Activated CD8-positive, alpha-beta memory T cell treated with anti-CD3 and anti-CD28 coated beads, Interleukin-2, amount 10 ng/mL, durations not matched to agents 7 days and 5 days (primary cell): ENCODE measurements at regions of chr20 and their contacts with region 1.

Region 1: GRCh38 chr20:40962730-40963504 is 65.7 kb upstream of the TOP1 start:
- DNase-seq: peak; percentile 83
- ATAC-seq: peak; percentile 90
- H3K4me3 Mint-ChIP-seq: no peak overlapping the region
- H3K27ac Mint-ChIP-seq: no peak overlapping the region
- H3K4me1 Mint-ChIP-seq: peaks cover 15% of the 10 kb centered on the region
- H3K27me3 Mint-ChIP-seq: peaks cover 5% of the 10 kb centered on the region

Region 2: GRCh38 chr20:40331807-40332560 is 630.9 kb before region 1 on chr20:
- CTCF ChIA-PET with region 1: no interaction called
- DNase-seq: no peak
- ATAC-seq: no peak
- H3K4me3 Mint-ChIP-seq: no peak overlapping the region
- H3K27ac Mint-ChIP-seq: no peak overlapping the region
- H3K4me1 Mint-ChIP-seq: no peaks in the 10 kb centered on the region
- H3K27me3 Mint-ChIP-seq: no peaks in the 10 kb centered on the region

Region 3: DNA sequence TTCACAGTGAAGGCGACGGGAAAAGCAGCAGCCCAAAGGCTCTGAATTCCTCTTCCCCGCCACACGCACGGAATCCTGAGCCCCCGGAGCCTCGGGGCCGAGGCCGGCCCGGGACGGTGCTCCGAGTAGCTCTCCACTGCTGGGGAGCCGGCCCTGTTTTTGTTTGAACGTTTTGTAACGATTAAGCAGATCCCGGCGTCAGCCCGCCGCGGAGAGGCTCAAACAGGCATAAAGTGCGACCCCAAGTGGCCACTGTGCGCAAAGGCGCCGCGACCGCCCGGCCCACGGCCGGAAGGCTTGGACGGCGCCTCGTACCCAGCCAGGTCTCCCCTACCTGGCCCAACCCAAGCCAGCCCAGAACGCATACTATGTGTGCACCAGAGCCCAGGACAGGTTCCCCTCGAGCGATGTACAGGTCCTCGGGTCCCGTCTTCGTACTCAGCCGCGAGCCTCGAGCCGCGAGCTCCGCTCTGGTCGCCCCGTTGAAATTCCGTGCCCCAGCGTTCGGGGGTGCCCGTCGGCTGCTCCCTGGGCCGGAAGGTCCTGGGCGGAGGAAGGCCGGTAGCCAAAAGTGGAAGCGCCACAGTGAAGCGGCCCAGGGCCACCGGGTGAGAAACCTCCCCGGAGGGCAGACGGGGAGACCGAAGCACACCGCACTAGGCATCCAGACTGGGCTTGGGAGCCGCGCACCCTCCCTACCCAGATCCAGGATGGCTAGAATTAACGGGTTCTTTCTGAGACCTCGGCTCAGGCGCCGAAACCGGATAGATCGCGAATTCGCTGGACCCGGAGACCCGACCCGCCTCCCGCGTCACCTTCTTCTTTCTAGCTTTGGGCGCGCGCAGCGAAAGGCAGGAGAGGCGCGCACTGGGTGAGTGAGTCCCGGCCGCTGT is 272.7 kb before region 1 on chr20:
- CTCF ChIA-PET with region 1: interaction called, 12 read pairs
- DNase-seq: peak; percentile 85
- ATAC-seq: peak; percentile 62
- H3K4me3 Mint-ChIP-seq: peak overlapping the region; percentile 52
- H3K27ac Mint-ChIP-seq: peak overlapping the region; percentile 66
- H3K4me1 Mint-ChIP-seq: peaks cover 9% of the 10 kb centered on the region
- H3K27me3 Mint-ChIP-seq: peaks cover 94% of the 10 kb centered on the region

Region 4: DNA sequence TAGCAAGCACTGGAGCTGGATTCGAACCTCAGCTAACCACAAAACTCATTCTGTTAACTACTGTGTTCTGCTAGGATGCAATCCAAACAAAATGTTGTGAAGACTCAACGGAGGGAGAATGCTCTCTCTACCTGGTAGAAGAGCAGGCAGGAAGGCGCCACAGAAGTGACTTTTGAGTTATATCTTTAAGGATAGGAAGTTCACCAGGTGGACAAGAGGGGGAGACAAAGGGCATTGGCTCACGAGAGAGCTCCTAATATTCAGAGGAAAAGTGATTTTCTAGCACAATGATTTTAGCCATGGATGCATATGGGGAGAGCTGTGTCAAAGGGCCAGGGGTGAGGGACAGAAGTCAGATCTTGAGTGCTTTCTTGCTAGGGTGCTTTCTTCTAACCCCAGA is 165.5 kb before region 1 on chr20:
- CTCF ChIA-PET with region 1: interaction called, 36 read pairs
- DNase-seq: no peak
- ATAC-seq: no peak
- H3K4me3 Mint-ChIP-seq: no peak overlapping the region
- H3K27ac Mint-ChIP-seq: no peak overlapping the region
- H3K4me1 Mint-ChIP-seq: no peaks in the 10 kb centered on the region
- H3K27me3 Mint-ChIP-seq: peaks cover 37% of the 10 kb centered on the region

Region 5: DNA sequence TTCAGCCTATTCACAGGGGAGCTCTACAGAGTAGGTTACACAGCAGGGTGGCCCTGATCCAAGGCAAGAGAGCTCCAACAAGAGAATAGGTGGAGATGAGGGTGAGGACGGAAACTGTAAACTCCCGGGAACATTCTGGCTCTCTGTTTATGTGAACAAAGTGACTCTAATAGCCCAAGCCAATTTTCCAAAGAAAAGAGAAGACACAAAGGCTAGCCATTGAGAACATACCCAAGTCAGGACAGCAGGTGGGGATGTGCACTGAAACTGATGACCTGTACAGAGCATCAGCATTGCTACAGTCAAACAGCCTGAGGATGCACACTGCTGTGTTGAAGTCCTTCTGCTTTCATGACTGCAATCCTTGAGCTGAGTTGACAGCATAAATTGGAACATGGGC is 70.3 kb before region 1 on chr20:
- CTCF ChIA-PET with region 1: interaction called, 11 read pairs
- DNase-seq: no peak
- ATAC-seq: no peak
- H3K4me3 Mint-ChIP-seq: no peak overlapping the region
- H3K27ac Mint-ChIP-seq: no peak overlapping the region
- H3K4me1 Mint-ChIP-seq: peaks cover 2% of the 10 kb centered on the region
- H3K27me3 Mint-ChIP-seq: peaks cover 4% of the 10 kb centered on the region

Region 6: GRCh38 chr20:41095110-41095969 is 132.4 kb after region 1 on chr20:
- CTCF ChIA-PET with region 1: interaction called, 51 read pairs
- DNase-seq: peak; percentile 69
- ATAC-seq: peak; percentile 77
- H3K4me3 Mint-ChIP-seq: no peak overlapping the region
- H3K27ac Mint-ChIP-seq: no peak overlapping the region
- H3K4me1 Mint-ChIP-seq: peaks cover 5% of the 10 kb centered on the region
- H3K27me3 Mint-ChIP-seq: no peaks in the 10 kb centered on the region

Region 7: DNA sequence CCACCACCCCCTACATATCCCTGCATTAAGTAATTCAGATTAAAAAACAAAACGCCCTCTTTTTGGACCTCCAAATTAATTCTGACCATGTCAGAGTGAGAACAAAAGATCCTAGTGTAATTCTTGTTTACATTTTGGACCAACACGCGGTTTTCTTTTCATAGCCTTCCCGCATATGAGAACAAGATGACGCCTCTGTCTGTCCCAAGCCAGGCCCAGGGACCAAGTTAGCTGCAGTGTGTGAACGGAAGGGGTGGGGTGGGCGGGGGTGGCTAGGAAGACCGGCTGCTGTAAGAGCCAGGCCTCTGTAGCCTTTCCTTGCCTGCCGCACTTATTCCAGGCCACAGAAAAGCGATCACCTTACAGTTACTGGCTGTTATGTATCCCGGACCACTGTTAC is 242.4 kb after region 1 on chr20:
- CTCF ChIA-PET with region 1: no interaction called
- DNase-seq: no peak
- ATAC-seq: no peak
- H3K4me3 Mint-ChIP-seq: no peak overlapping the region
- H3K27ac Mint-ChIP-seq: no peak overlapping the region
- H3K4me1 Mint-ChIP-seq: no peaks in the 10 kb centered on the region
- H3K27me3 Mint-ChIP-seq: no peaks in the 10 kb centered on the region